ENCODE measurements at regions of chr7 and their contacts with region 1.

Region 1: GRCh38 chr7:85172530-85172941 is 14.3 kb downstream of the SEMA3D start:
- DNase-seq: peak; percentile 9 to 81
- H3K4me3 ChIP-seq: peak overlapping the region in 1 of 2 donors; percentile 38
- H3K27ac ChIP-seq: peak overlapping the region; percentile 65 to 77
- H3K4me1 ChIP-seq: peaks cover 0 to 8% of the 10 kb centered on the region in 2 donors
- H3K27me3 ChIP-seq: no peaks in the 10 kb centered on the region
- CTCF ChIP-seq: no peak

Region 2: GRCh38 chr7:85068799-85069198 is 103.7 kb before region 1 on chr7:
- intact Hi-C with region 1: loop called (anchors 5 kb)
- DNase-seq: no peak
- H3K4me3 ChIP-seq: no peak overlapping the region
- H3K27ac ChIP-seq: peak overlapping the region in 1 of 2 donors; percentile 41
- H3K4me1 ChIP-seq: peaks cover 0 to 21% of the 10 kb centered on the region in 2 donors
- H3K27me3 ChIP-seq: no peaks in the 10 kb centered on the region
- CTCF ChIP-seq: no peak

Region 3: DNA sequence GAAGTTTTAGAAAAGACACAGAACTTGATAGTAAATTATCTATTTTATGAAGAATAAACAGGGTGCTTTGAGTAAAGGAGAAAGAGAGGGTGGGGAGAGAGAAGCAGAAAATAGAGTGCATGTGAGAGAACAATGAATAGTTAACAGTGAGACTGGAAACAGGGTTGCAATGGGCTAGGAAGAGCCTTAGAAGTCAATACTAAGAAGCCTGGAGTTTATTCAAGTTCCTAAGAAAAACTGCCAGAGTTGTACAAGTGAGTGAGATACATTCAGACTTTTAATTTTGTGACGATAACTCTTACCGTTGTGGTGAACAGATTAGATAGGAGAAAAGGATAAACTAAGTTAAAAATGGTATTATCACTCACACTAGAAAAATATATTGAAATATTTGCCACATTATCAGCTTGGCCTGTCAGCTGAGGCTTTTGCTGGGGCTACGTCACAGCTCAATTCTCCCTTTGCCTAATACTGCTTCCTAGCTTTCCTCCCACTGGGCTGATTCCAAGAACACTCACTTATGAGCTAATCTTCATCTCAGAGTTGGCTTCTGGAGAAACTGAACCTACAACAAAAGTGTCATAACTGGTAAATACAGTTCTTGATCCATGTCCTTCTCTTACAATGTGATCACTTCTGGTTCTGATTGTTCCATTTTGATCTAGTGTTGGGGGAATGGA is 78.3 kb before region 1 on chr7:
- intact Hi-C with region 1: loop called (anchors 5 kb)
- DNase-seq: peak; percentile 10 to 81
- H3K4me3 ChIP-seq: no peak overlapping the region
- H3K27ac ChIP-seq: peak overlapping the region; percentile 76 to 77
- H3K4me1 ChIP-seq: no peaks in the 10 kb centered on the region
- H3K27me3 ChIP-seq: no peaks in the 10 kb centered on the region
- CTCF ChIP-seq: no peak

Measured in ascending aorta (tissue), 2 donors.